ENCODE measurements at regions of chr18 and their contacts with region 1.

Region 1: GRCh38 chr18:61743775-61744531 is 148.9 kb downstream of the RNF152 start:
- DNase-seq: peak in 4 of 5 donors; percentile 51 to 70 (median 68)
- ATAC-seq: peak; percentile 63 to 78 (median 70)
- H3K4me3 ChIP-seq: no peak overlapping the region
- H3K27ac ChIP-seq: peak overlapping the region; percentile 66 to 95 (median 85)
- H3K4me1 ChIP-seq: peaks cover 0 to 74% (median 32%) of the 10 kb centered on the region in 12 donors
- H3K27me3 ChIP-seq: no peaks in the 10 kb centered on the region
- CTCF ChIP-seq: no peak
- POLR2A ChIP-seq: no peak

Region 2: GRCh38 chr18:61581578-61582201 is 162.3 kb before region 1 on chr18:
- intact Hi-C with region 1: loop called in 2 of 10 experiments (anchors 5 kb)
- DNase-seq: peak; percentile 73 to 88 (median 75)
- ATAC-seq: peak; percentile 83 to 93 (median 90)
- H3K4me3 ChIP-seq: peak overlapping the region in 11 of 12 donors; percentile 28 to 58 (median 49)
- H3K27ac ChIP-seq: peak overlapping the region in 11 of 12 donors; percentile 55 to 84 (median 71)
- H3K4me1 ChIP-seq: peaks cover 0 to 40% (median 16%) of the 10 kb centered on the region in 12 donors
- H3K27me3 ChIP-seq: no peaks in the 10 kb centered on the region
- CTCF ChIP-seq: peak; percentile 99 to 100 (median 99)
- POLR2A ChIP-seq: no peak

Region 3: DNA sequence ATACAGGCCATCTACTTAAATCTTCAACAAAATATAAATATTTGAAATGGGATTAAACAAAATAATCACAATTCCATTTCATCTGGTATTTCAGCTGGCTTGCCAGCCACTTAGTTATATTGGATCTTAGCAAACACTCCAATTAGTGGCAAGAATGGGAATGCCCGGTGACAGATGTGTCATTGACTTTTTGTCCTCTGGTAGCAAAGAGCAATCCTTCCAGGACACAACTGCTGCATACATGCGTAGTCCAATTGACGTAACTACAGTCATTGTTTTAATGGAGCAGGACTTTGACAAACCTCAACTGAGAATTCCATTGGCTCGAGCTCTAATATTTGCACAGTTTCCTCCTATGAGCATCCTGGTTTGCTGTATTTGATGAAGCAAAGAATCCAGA is 78.9 kb after region 1 on chr18:
- intact Hi-C with region 1: no loop called
- DNase-seq: no peak
- ATAC-seq: no peak
- H3K4me3 ChIP-seq: no peak overlapping the region
- H3K27ac ChIP-seq: no peak overlapping the region
- H3K4me1 ChIP-seq: peaks cover 0 to 30% (median 0%) of the 10 kb centered on the region in 12 donors
- H3K27me3 ChIP-seq: no peaks in the 10 kb centered on the region
- CTCF ChIP-seq: no peak
- POLR2A ChIP-seq: no peak

Region 4: DNA sequence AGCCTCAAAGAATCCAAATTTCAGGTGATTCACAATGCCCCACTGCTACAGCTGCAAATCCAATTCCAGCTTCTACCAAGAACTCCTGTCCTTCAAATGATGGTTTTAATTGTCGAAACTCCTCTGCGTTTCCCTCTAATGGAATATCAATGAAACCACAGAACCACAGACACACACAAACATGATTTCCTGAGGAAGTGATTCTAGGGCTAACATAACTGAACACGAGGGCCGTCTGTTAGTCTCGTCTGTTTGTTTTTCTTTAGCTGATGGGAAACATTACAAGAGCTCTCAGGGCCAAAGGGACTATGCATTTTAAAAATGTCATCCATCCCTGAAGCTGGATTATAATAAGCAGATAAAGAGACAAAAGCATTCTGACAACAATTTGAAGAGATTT is 89.4 kb after region 1 on chr18:
- intact Hi-C with region 1: loop called in 1 of 10 experiments (anchors 10 kb)
- DNase-seq: no peak
- ATAC-seq: peak in 3 of 4 donors; percentile 44 to 79 (median 51)
- H3K4me3 ChIP-seq: peak overlapping the region in 3 of 12 donors; percentile 1 to 18 (median 15)
- H3K27ac ChIP-seq: peak overlapping the region in 9 of 12 donors; percentile 13 to 71 (median 49)
- H3K4me1 ChIP-seq: peaks cover 0 to 68% (median 36%) of the 10 kb centered on the region in 12 donors
- H3K27me3 ChIP-seq: peaks cover 0 to 34% (median 0%) of the 10 kb centered on the region in 9 donors
- CTCF ChIP-seq: no peak
- POLR2A ChIP-seq: no peak

Region 5: DNA sequence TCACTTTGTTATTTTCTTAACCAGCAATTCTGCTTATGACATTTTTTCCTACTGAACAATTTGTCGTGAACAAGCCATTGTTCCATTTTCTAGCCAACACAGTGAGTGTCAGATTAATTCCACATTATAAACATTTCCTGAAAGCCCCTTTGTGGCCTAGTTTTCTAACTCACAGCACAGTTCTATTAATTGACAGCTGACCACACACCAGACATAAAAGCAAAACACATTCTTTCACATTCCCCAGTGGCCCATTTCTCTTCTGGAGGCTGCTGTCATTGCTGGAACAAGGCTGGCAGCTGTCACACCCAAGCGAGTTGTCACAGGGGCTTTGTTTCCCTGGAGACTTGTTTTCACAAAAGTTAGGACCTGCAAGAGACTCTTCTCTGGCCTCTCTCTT is 98.2 kb after region 1 on chr18:
- intact Hi-C with region 1: loop called in 2 of 10 experiments (anchors 5 to 10 kb)
- DNase-seq: no peak
- ATAC-seq: peak in 2 of 4 donors; percentile 32 to 51
- H3K4me3 ChIP-seq: no peak overlapping the region
- H3K27ac ChIP-seq: peak overlapping the region in 6 of 12 donors; percentile 13 to 45 (median 24)
- H3K4me1 ChIP-seq: peaks cover 0 to 40% (median 7%) of the 10 kb centered on the region in 12 donors
- H3K27me3 ChIP-seq: peaks cover 0 to 9% (median 0%) of the 10 kb centered on the region in 9 donors
- CTCF ChIP-seq: no peak
- POLR2A ChIP-seq: no peak

Region 6: GRCh38 chr18:61882296-61883004 is 138.5 kb after region 1 on chr18:
- intact Hi-C with region 1: loop called in 3 of 10 experiments (anchors 5 to 10 kb)
- DNase-seq: no peak
- ATAC-seq: peak in 1 of 4 donors; percentile 52
- H3K4me3 ChIP-seq: no peak overlapping the region
- H3K27ac ChIP-seq: no peak overlapping the region
- H3K4me1 ChIP-seq: peaks cover 0 to 38% (median 6%) of the 10 kb centered on the region in 12 donors
- H3K27me3 ChIP-seq: no peaks in the 10 kb centered on the region
- CTCF ChIP-seq: no peak
- POLR2A ChIP-seq: no peak

Region 7: GRCh38 chr18:61887841-61888240 is 143.9 kb after region 1 on chr18:
- intact Hi-C with region 1: loop called in 9 of 10 experiments (anchors 5 to 10 kb)
- DNase-seq: no peak
- ATAC-seq: no peak
- H3K4me3 ChIP-seq: peak overlapping the region in 1 of 12 donors; percentile 19
- H3K27ac ChIP-seq: peak overlapping the region in 5 of 12 donors; percentile 49 to 97 (median 65)
- H3K4me1 ChIP-seq: peaks cover 0 to 53% (median 11%) of the 10 kb centered on the region in 12 donors
- H3K27me3 ChIP-seq: peaks cover 0 to 14% (median 0%) of the 10 kb centered on the region in 9 donors
- CTCF ChIP-seq: no peak
- POLR2A ChIP-seq: no peak

Region 8: GRCh38 chr18:62018034-62018758 is 274.2 kb after region 1 on chr18:
- intact Hi-C with region 1: loop called in 1 of 10 experiments (anchors 10 kb)
- DNase-seq: peak; percentile 60 to 82 (median 64)
- ATAC-seq: peak; percentile 92 to 95 (median 94)
- H3K4me3 ChIP-seq: no peak overlapping the region
- H3K27ac ChIP-seq: peak overlapping the region; percentile 21 to 64 (median 49)
- H3K4me1 ChIP-seq: peaks cover 0 to 33% (median 8%) of the 10 kb centered on the region in 12 donors
- H3K27me3 ChIP-seq: no peaks in the 10 kb centered on the region
- CTCF ChIP-seq: no peak
- POLR2A ChIP-seq: no peak